ENCODE measurements at regions of chr1 and their contacts with region 1.

Region 1: DNA sequence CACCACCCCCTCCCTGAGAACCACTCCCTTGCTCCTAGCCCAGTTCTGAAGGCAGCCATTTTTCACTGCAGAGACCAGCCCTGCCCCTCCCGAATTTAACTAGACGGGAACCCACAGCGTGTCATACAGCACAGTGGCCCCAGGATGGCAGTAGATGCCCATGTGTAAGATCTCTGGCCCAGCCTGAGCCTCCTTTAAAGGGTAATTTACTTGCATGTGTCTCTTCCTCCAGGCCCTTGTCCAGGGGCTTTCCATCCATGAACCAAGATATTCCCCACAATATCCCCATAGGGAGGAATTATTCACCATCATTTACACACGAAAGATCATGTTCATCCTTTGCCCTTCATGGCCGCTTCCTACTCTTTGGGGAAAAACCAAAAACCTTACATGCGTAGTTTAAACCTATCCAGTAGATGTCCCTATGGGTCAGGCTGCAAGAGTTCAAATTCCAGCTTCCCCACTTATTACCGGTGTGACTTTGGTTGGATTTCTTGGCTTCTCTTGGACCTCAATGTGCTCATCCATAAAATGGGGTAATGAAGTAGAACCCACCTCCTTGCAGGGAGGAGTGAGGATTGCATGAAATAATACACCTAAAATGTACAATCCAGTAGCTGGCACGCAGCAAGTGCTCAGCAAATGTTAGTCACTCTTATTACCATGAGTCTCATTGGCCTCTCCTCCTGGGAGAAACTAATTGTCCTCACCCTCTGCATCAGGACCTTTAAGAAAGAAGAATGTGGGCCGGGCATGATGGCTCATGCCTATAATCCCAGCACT is 4.0 kb upstream of the LACTBL1 start:
- DNase-seq: peak; percentile 38
- H3K4me3 Mint-ChIP-seq: no peak overlapping the region
- H3K27ac Mint-ChIP-seq: no peak overlapping the region
- H3K4me1 Mint-ChIP-seq: no peaks in the 10 kb centered on the region
- H3K27me3 Mint-ChIP-seq: peaks cover 21% of the 10 kb centered on the region

Region 2: GRCh38 chr1:23184212-23184934 is 207.7 kb after region 1 on chr1:
- intact Hi-C with region 1: loop called (anchors 1 kb)
- DNase-seq: peak; percentile 17
- H3K4me3 Mint-ChIP-seq: peak overlapping the region; percentile 49
- H3K27ac Mint-ChIP-seq: no peak overlapping the region
- H3K4me1 Mint-ChIP-seq: peaks cover 12% of the 10 kb centered on the region
- H3K27me3 Mint-ChIP-seq: peaks cover 14% of the 10 kb centered on the region

Region 3: GRCh38 chr1:23278717-23279116 is 302.1 kb after region 1 on chr1:
- intact Hi-C with region 1: loop called (anchors 5 kb)
- DNase-seq: no peak
- H3K4me3 Mint-ChIP-seq: no peak overlapping the region
- H3K27ac Mint-ChIP-seq: no peak overlapping the region
- H3K4me1 Mint-ChIP-seq: no peaks in the 10 kb centered on the region
- H3K27me3 Mint-ChIP-seq: peaks cover 7% of the 10 kb centered on the region

Region 4: GRCh38 chr1:23403735-23404486 is 427.3 kb after region 1 on chr1:
- intact Hi-C with region 1: loop called (anchors 10 kb)
- DNase-seq: peak; percentile 72
- H3K4me3 Mint-ChIP-seq: no peak overlapping the region
- H3K27ac Mint-ChIP-seq: no peak overlapping the region
- H3K4me1 Mint-ChIP-seq: peaks cover 12% of the 10 kb centered on the region
- H3K27me3 Mint-ChIP-seq: no peaks in the 10 kb centered on the region